Aorta (tissue), 5 donors: ENCODE measurements at regions of chr7 and their contacts with region 1.

Region 1: DNA sequence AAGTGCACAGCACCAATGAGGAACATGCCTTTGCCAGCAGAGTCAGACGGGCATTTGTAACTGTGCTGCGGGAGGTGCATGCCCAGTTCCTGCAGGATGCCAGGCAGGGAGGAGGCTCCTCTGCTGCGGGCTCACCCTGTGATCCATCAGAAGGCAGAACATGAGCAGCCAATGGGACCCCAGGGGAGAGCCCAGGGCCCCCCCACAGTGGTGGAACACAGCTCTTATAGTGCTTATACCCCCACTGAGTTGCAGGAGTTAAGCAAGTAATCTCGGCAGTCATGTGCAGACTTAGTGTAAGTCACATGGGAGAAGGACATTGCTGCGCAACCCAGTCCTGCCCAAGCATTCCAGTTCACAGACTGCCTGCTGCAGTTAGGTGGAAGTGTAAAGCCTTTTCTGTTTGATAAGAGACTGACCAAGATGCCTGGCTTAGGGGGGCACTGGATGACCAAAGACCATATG is 120.3 kb upstream of the TMEM106B start:
- DNase-seq: no peak
- ATAC-seq: peak; percentile 10
- H3K4me3 ChIP-seq: no peak overlapping the region
- H3K27ac ChIP-seq: no peak overlapping the region
- H3K4me1 ChIP-seq: no peaks in the 10 kb centered on the region
- H3K27me3 ChIP-seq: no peaks in the 10 kb centered on the region

Region 2: DNA sequence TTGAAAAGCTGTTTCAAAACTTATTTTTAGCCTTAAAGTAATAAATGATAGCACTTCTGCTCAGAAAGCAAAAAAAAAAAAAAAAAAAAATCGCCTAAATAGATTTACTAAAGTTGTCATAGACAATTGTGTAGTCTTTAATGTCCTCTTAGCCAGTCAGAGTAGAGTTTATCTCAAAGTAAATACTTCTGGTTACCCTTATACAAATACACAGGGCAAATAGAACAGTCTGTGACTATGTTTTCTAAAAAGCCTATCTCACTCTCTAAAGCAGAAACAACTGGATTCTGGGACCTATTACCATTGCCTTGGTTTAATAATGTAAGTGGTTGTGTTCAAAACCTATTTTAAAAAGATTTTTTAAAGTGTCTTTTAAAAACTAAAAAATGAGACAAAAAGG is 102.6 kb before region 1 on chr7:
- intact Hi-C with region 1: no loop called
- DNase-seq: no peak
- ATAC-seq: no peak
- H3K4me3 ChIP-seq: no peak overlapping the region
- H3K27ac ChIP-seq: no peak overlapping the region
- H3K4me1 ChIP-seq: no peaks in the 10 kb centered on the region
- H3K27me3 ChIP-seq: no peaks in the 10 kb centered on the region

Region 3: GRCh38 chr7:12314199-12314598 is 223.4 kb after region 1 on chr7:
- intact Hi-C with region 1: loop called in 1 of 2 experiments (anchors 10 kb)
- DNase-seq: no peak
- ATAC-seq: no peak
- H3K4me3 ChIP-seq: no peak overlapping the region
- H3K27ac ChIP-seq: no peak overlapping the region
- H3K4me1 ChIP-seq: no peaks in the 10 kb centered on the region
- H3K27me3 ChIP-seq: no peaks in the 10 kb centered on the region